AG04450 (cell line): ENCODE measurements at regions of chr12 and their contacts with region 1.

Region 1: DNA sequence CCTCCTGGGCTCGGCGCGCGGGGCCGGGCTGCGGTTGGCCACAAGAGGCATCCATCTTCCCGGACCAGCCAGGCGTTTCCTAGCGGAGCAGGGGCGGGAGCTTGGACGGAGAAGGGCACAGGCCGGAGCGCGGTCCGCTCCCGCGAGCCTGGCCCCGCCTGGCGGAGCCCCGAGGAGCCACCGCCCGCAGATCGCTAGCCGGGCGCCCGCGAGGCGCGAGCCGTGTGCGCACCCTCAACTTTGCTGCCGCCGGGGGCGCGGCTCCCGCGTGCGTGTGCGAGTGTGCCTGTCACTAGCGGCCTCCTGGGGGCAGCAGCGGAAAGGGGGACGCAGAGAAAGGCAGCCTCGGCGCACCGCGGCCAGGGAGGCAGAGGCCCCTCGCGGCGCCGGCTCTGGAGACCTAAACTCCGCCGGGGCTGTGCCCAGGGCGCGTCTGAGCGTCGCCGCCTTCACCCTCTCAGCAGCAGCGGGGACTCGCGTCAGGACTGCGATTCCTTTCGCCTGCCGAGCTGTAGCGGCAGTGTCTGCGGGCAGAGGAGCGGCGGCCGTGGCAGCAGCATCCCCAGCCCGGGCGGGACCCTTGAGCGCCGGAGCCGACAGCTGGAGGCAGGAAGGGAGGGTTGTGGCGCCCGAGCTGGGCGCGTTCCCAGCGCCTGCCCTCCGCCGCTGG is 644 bp upstream of the SRGAP1 start:
- DNase-seq: peak; percentile 93
- H3K4me3 ChIP-seq: peak overlapping the region; percentile 97
- H3K27ac ChIP-seq: peak overlapping the region; percentile 89
- H3K27me3 ChIP-seq: no peaks in the 10 kb centered on the region
- CTCF ChIP-seq: peak; percentile 86

Region 2: GRCh38 chr12:63853978-63854377 is 10.1 kb after region 1 on chr12:
- CTCF ChIA-PET with region 1: interaction called, 18 read pairs
- POLR2A ChIA-PET with region 1: no interaction called
- DNase-seq: no peak
- H3K4me3 ChIP-seq: no peak overlapping the region
- H3K27ac ChIP-seq: no peak overlapping the region
- H3K27me3 ChIP-seq: no peaks in the 10 kb centered on the region
- CTCF ChIP-seq: no peak

Region 3: GRCh38 chr12:63917864-63918799 is 74.3 kb after region 1 on chr12:
- CTCF ChIA-PET with region 1: interaction called, 3 read pairs
- POLR2A ChIA-PET with region 1: interaction called, 12 read pairs
- DNase-seq: peak; percentile 84
- H3K4me3 ChIP-seq: peak overlapping the region; percentile 8
- H3K27ac ChIP-seq: peak overlapping the region; percentile 98
- H3K27me3 ChIP-seq: no peaks in the 10 kb centered on the region
- CTCF ChIP-seq: no peak

Region 4: DNA sequence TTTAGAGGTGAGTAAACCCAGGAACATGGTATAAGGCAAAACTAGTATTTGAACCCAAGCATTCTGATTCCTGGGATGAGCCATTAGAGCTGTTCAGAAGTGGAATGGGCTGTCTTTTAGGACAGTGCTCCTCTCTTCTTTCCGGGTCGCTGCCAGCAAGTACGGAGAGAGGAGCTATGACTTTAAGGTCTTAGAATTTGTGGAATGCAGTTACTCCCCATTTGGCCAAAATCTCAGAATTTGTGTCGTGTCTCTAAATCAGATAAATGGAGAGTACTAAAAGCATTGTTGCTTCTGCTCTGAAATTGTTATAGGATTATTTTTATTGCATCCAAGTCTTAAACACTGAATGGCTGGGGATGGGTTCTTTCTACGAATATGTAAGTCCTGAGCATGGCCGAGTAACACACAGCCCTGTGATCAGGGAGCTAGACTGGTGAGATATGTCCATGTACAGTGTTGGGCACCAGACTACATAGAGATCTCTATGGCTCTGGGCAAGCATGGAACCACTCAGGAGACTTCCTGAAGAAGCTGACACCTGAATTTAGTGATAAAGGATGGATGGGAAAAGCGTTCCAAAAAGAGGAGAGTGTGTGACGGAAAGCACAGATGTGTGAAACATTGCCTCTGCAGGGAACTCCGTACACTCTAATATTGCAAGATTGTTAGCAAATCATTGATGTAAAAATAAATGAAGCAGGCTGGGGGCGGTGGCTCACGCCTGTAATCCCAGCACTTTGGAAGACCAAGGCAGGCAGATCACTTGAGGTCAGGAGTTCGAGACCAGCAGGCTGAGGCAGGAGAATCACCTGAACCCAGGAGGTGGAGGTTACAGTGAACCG is 185.4 kb after region 1 on chr12:
- CTCF ChIA-PET with region 1: no interaction called
- POLR2A ChIA-PET with region 1: no interaction called
- DNase-seq: peak; percentile 8
- H3K4me3 ChIP-seq: no peak overlapping the region
- H3K27ac ChIP-seq: peak overlapping the region; percentile 61
- H3K27me3 ChIP-seq: no peaks in the 10 kb centered on the region
- CTCF ChIP-seq: no peak

Region 5: GRCh38 chr12:64236549-64236948 is 392.7 kb after region 1 on chr12:
- CTCF ChIA-PET with region 1: interaction called, 10 read pairs
- POLR2A ChIA-PET with region 1: no interaction called
- DNase-seq: no peak
- H3K4me3 ChIP-seq: no peak overlapping the region
- H3K27ac ChIP-seq: no peak overlapping the region
- H3K27me3 ChIP-seq: no peaks in the 10 kb centered on the region
- CTCF ChIP-seq: peak; percentile 32; the same call in 1 of the 2 replicates

Region 6: GRCh38 chr12:64256166-64256800 is 412.4 kb after region 1 on chr12:
- CTCF ChIA-PET with region 1: interaction called, 95 read pairs
- POLR2A ChIA-PET with region 1: no interaction called
- DNase-seq: peak; percentile 27
- H3K4me3 ChIP-seq: no peak overlapping the region
- H3K27ac ChIP-seq: no peak overlapping the region
- H3K27me3 ChIP-seq: no peaks in the 10 kb centered on the region
- CTCF ChIP-seq: peak; percentile 67